HepG2 (cell line): ENCODE measurements at regions of chr7 and their contacts with region 1.

Region 1: DNA sequence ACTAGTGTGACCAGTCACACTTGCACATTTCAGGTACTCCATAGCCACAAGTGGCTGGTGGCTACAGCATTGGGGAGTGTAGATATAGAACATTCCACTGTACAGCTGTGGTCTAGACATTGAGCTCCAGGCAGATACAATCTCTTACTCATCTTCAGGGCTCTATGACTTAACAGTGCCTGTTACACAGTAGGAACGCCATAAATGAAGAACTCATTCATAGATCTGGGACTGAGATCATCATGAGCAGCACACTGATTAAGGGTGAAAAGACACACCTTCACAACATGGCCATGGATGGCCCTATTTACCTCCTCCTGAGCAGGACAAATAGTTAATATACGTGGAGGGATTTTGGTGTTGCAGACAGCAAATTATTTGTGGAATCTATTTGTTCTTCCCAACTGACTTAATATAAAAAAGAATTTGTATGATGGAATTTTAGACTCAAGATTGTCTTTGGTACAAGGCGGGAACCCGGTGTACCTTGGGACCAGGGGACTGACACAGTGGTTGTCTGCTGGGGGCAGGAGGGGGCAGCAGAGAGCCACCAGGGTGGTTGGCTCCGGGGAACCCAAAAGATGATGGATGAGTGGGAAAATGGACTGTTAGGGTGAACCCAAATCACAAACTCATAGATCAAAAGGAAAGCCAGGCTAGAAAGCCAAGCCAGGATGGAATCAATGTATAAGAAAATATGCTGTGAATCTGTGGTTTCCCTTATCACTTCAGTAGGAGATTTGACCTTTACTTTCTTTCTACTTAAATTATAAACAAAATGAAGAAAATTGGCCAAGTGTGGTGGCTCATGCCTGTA is 24.3 kb upstream of the CPA2 start:
- DNase-seq: peak; percentile 14
- ATAC-seq: peak; percentile 96
- H3K4me3 ChIP-seq: no peak overlapping the region
- H3K27ac ChIP-seq: no peak overlapping the region
- H3K4me1 ChIP-seq: no peaks in the 10 kb centered on the region
- H3K27me3 ChIP-seq: no peaks in the 10 kb centered on the region
- CTCF ChIP-seq: peak; percentile 88
- EP300 ChIP-seq: no peak
- POLR2A ChIP-seq: no peak
- RAD21 ChIP-seq: peak; percentile 76

Region 2: GRCh38 chr7:130227883-130228575 is 14.4 kb before region 1 on chr7:
- CTCF ChIA-PET with region 1: no interaction called
- POLR2A ChIA-PET with region 1: no interaction called
- in situ Hi-C with region 1: no loop called
- intact Hi-C with region 1: no loop called
- DNase-seq: peak; percentile 53
- ATAC-seq: peak; percentile 38; the same call in 1 of the 3 replicates
- H3K4me3 ChIP-seq: peak overlapping the region in 2 of 3 experiments; percentile 4 to 31; a peak in 2 of 6 replicates
- H3K27ac ChIP-seq: peak overlapping the region; percentile 40
- H3K4me1 ChIP-seq: peaks cover 52% of the 10 kb centered on the region
- H3K27me3 ChIP-seq: no peaks in the 10 kb centered on the region
- CTCF ChIP-seq: no peak
- EP300 ChIP-seq: 0 out of 4 replicates have a peak, but pooled peaks of 1 of the 2 experiments have one; percentile 20
- POLR2A ChIP-seq: no peak
- RAD21 ChIP-seq: no peak

Region 3: GRCh38 chr7:130560970-130561369 is 318.6 kb after region 1 on chr7:
- CTCF ChIA-PET with region 1: interaction called, 11 read pairs
- POLR2A ChIA-PET with region 1: no interaction called
- in situ Hi-C with region 1: no loop called
- intact Hi-C with region 1: loop called (anchors 2 kb)
- DNase-seq: peak; percentile 20
- ATAC-seq: no peak
- H3K4me3 ChIP-seq: no peak overlapping the region
- H3K27ac ChIP-seq: no peak overlapping the region
- H3K4me1 ChIP-seq: no peaks in the 10 kb centered on the region
- H3K27me3 ChIP-seq: no peaks in the 10 kb centered on the region
- CTCF ChIP-seq: peak; percentile 44
- EP300 ChIP-seq: no peak
- POLR2A ChIP-seq: no peak
- RAD21 ChIP-seq: no peak

Region 4: GRCh38 chr7:130695840-130696239 is 453.4 kb after region 1 on chr7:
- CTCF ChIA-PET with region 1: interaction called, 9 read pairs
- POLR2A ChIA-PET with region 1: no interaction called
- in situ Hi-C with region 1: no loop called
- intact Hi-C with region 1: loop called (anchors 2 kb)
- DNase-seq: peak; percentile 36
- ATAC-seq: peak; percentile 53
- H3K4me3 ChIP-seq: no peak overlapping the region
- H3K27ac ChIP-seq: no peak overlapping the region
- H3K4me1 ChIP-seq: no peaks in the 10 kb centered on the region
- H3K27me3 ChIP-seq: no peaks in the 10 kb centered on the region
- CTCF ChIP-seq: peak; percentile 52
- EP300 ChIP-seq: no peak
- POLR2A ChIP-seq: no peak
- RAD21 ChIP-seq: no peak

Region 5: DNA sequence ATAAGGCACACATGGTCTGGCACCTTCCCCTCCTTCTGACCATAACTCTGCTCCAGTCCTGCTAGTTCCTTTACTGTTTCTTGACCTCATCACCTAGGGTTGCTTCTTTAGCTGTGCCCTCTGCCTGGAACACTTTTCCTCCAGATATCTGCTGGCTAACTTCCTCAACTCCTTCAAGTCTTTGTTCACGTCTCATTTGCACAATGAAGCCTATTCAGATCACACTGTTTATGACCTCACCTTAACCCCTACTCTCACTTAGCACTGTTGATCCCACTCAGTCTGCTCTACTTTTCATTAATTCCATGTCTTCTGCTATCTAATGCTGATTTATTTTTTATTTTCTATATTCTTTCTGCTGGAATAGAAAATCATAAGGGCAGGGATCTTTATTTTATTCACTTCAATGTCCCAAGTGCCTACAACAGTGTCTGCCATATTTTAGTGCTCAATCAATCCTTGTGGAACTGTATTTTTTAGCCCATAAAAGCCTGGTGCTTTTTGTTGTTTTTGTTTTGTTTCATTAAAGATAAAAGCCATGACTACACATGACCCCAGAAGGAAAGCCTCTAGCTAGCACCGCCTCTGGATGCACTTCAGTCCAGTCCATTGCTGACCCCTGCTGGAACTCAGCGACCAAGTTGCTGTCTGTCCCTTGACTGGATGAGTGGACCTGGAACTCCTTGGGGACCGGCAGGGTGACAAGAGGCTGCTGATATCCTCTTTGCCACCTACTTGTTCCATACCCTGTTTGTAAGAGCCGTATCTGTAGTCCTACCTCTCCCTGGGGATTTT is 479.3 kb after region 1 on chr7:
- CTCF ChIA-PET with region 1: interaction called, 21 read pairs
- POLR2A ChIA-PET with region 1: no interaction called
- in situ Hi-C with region 1: no loop called
- intact Hi-C with region 1: loop called (anchors 1 kb)
- DNase-seq: peak; percentile 49
- ATAC-seq: peak; percentile 98
- H3K4me3 ChIP-seq: no peak overlapping the region
- H3K27ac ChIP-seq: no peak overlapping the region
- H3K4me1 ChIP-seq: no peaks in the 10 kb centered on the region
- H3K27me3 ChIP-seq: 0 out of 5 replicates have a peak, but pooled peaks cover 0 to 5% of the 10 kb centered on the region in 2 experiments
- CTCF ChIP-seq: peak; percentile 90
- EP300 ChIP-seq: no peak
- POLR2A ChIP-seq: no peak
- RAD21 ChIP-seq: peak; percentile 77

Region 6: GRCh38 chr7:130758429-130759056 is 516.1 kb after region 1 on chr7:
- CTCF ChIA-PET with region 1: interaction called, 3 read pairs
- POLR2A ChIA-PET with region 1: no interaction called
- in situ Hi-C with region 1: no loop called
- intact Hi-C with region 1: loop called (anchors 1 kb)
- DNase-seq: peak; percentile 29
- ATAC-seq: no peak
- H3K4me3 ChIP-seq: no peak overlapping the region
- H3K27ac ChIP-seq: no peak overlapping the region
- H3K4me1 ChIP-seq: no peaks in the 10 kb centered on the region
- H3K27me3 ChIP-seq: peaks cover 0 to 9% of the 10 kb centered on the region in 2 experiments; a peak in 1 of 5 replicates
- CTCF ChIP-seq: peak; percentile 39
- EP300 ChIP-seq: no peak
- POLR2A ChIP-seq: no peak
- RAD21 ChIP-seq: no peak

Region 7: DNA sequence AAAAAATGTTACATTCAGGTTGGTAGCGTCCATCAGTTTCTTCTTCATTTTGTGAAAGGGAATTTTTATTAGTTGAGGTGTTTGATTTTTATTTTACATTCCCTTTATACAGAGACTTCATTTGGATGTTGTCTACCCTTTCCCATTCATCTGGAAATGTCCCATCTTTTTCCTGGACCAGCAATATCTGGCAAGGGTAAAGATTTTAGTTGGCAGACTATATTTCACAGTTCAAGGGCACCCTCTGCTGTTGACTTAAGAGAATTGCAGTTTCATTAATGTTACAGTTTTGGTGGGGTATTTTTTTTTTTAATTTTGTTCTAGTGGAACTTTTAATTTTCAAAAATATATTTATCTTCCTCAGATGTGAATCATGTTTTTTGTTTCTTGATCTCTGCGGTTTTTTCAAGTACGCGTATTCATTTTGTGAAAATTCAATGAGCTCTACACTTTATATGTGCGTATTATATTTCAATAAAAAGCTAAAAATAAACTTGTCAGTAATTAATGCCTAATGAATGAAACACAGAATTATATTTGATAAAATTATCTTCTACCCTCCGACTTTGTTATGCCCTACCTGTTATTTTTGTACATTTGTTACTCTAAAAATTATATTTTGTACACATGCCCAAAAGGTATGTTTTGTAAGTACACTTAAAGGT is 589.5 kb after region 1 on chr7:
- CTCF ChIA-PET with region 1: no interaction called
- POLR2A ChIA-PET with region 1: no interaction called
- in situ Hi-C with region 1: no loop called
- intact Hi-C with region 1: loop called (anchors 5 kb)
- DNase-seq: peak; percentile 32
- ATAC-seq: no peak
- H3K4me3 ChIP-seq: no peak overlapping the region
- H3K27ac ChIP-seq: no peak overlapping the region
- H3K4me1 ChIP-seq: no peaks in the 10 kb centered on the region
- H3K27me3 ChIP-seq: no peaks in the 10 kb centered on the region
- CTCF ChIP-seq: peak; percentile 62
- EP300 ChIP-seq: no peak
- POLR2A ChIP-seq: no peak
- RAD21 ChIP-seq: peak; percentile 25; the same call in 1 of the 2 replicates